ENCODE measurements at regions of chr3 and their contacts with region 1.

Region 1: DNA sequence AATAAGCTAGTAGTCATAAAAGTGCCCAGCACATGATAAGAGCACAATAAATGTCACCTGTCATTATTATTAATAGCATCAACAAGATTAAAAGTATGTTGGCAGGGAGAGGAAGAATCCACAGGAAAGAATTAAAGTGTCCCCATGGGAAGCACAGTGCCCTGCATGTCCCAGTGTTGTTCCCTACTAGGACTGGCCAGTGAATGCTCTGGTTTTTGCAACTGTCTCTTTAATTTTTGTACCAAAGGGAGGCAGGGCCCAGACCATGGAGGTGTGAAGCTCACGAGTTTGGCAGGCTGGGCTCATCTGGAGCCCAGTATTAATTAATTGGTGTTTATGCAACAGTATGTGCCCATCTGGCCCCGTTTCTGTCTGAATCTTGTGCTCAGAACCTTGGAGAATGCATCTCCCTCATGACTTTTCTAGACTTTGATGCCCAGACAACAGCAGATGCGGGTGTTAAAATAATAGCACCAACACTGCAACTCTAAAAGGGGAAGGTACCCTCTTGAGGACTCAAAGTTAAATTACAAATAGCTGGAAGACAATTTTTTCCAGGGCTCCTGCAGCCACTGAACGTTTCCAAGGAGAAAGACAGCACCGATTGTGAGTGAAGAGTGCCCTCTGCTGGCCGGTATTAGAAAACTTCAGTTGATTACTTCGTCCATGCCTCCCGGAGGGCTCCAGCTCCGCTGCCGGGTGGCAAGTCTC is 71.9 kb upstream of the SPATA12 start:
- DNase-seq: peak; percentile 90

Region 2: DNA sequence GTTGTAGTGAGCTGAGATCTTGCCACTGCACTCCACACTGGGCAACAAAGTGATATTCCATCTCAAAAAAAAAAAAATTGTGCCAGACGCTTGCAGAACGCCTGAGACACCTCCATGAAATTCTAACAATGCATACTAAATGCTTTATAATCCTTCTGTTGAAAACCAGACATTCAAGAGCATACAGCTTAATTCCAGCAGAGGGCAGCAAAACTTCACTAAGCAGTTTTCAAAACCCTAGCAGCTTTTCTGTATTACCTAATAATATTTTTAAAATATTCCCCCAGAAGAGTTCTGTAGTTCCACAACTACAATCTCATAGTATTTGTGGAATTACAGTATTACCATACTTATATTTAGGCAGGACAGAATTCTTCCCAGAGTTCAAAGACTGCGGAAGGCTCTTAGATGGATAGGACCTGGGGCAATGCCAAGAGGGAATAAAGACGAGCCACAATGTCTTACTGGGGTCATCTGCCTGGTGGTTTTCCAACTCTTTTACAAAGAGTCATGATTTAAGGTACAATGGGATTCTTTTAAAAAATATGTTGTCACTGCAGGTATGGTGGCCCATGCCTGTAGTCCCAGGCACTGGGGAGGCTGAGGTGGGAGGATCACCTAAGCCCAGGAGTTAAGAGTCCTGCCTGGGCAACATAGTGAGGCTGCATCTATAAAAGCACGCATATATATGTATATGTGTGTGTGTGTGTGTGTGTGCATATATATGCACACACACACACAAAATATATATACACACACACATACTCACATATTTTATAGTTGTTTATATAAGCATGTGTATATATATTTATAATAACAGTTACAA is 285.9 kb before region 1 on chr3:
- intact Hi-C with region 1: loop called (anchors 2 kb)
- DNase-seq: no peak

Region 3: DNA sequence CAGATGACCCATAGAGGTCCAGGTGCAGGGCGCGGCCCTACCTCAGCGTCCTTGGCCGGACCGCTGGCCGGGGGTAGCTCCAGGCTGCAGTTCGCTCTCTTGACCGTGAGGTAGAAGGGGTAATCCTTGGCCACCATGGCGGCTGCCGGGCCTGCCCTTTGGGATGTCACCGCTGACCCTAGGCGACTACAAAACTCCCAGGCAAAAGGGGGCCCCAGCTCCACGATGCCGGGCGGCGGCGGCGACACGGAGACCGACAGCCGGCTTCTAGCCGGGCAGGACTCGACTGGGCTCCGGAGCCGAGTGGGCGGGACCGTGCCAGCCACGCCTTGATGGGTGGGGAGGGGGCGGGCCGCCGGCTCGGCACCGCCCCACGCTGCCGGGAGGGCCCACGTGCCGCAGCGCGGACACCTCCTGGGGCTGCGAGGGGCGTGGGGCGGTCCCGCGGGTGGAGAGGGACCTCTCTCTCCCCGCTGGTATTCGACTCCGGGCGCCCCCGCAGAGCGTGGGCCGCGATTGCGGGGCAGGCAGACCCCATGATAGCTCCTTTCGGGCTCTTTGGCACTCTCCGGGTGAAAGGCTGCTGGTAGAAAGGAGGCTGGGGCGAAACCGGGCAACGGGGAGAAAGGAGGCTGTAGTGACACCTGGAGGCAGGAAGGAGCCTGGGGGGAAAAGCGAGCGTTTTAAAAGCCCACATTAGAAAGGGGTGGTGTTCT is 186.8 kb before region 1 on chr3 and contains the start of gene ARHGEF3:
- intact Hi-C with region 1: loop called (anchors 5 kb)
- DNase-seq: peak; percentile 96
- total RNA-seq, gene ARHGEF3: 20.3 to 24.2 TPM

Region 4: GRCh38 chr3:56855856-56856512 is 132.6 kb before region 1 on chr3:
- intact Hi-C with region 1: loop called in 1 of 2 experiments (anchors 10 kb)
- DNase-seq: peak; percentile 87

Region 5: GRCh38 chr3:57017459-57017845 is 28.8 kb after region 1 on chr3:
- intact Hi-C with region 1: loop called in 1 of 2 experiments (anchors 1 kb)
- DNase-seq: peak; percentile 75